ENCODE measurements at regions of chr20 and their contacts with region 1.

Region 1: DNA sequence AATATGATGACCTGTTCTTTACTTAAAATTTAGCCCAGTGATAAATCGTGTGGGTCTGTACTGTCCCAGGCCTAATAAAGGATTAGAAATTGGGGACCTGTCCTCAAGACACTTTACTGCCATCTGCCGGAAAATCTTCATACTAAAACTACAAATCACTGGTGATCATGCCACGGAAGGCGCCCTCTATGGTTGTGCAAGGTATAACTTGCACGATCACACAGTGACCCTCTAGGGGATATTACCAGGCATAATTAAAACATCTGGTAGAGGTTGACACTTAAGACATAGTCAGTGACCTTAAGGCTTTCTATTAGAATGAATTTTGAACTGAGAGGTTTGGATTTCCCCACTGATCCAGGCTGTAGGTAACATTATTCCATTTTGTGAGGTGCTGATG is 172.6 kb downstream of the BMP2 start:
- DNase-seq: peak; percentile 8
- ATAC-seq: no peak
- H3K4me3 Mint-ChIP-seq: no peak overlapping the region
- H3K27ac Mint-ChIP-seq: no peak overlapping the region
- H3K4me1 Mint-ChIP-seq: no peaks in the 10 kb centered on the region
- H3K27me3 Mint-ChIP-seq: no peaks in the 10 kb centered on the region

Region 2: DNA sequence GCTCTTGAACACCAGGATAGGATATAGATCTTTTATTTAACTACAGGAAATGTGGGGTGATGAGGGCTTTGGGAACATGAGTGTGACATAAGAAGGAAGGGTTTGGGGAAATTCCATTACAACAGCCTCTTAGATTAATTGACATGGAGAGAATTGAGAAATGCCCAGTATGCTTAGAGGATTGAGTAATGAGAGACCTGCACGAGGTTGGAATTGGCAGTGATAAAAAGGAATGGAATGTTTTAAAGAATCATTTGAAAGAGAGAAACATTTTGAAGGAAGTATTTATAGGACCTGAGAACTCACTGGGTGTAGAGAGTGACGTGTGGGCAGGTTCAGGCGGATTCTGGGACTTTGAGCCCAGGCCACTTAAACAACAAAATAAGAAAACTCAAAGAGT is 54.4 kb after region 1 on chr20:
- CTCF ChIA-PET with region 1: no interaction called
- POLR2A ChIA-PET with region 1: no interaction called
- intact Hi-C with region 1: loop called in 1 of 2 experiments (anchors 10 kb)
- DNase-seq: no peak
- ATAC-seq: no peak
- H3K4me3 Mint-ChIP-seq: no peak overlapping the region
- H3K27ac Mint-ChIP-seq: no peak overlapping the region
- H3K4me1 Mint-ChIP-seq: no peaks in the 10 kb centered on the region
- H3K27me3 Mint-ChIP-seq: no peaks in the 10 kb centered on the region

Measured in activated CD4-positive, alpha-beta T cell treated with anti-CD3 and anti-CD28 coated beads for 36 hours (primary cell).